PC-9 (cell line): ENCODE measurements at regions of chr2 and their contacts with region 1.

Region 1: GRCh38 chr2:12317814-12318426 is 398.8 kb upstream of the TRIB2 start:
- DNase-seq: peak; percentile 12 to 86
- H3K4me3 ChIP-seq: no peak overlapping the region; the same call in 1 of the 2 replicates
- H3K27ac ChIP-seq: peak overlapping the region; percentile 92
- H3K4me1 ChIP-seq: peaks cover 44% of the 10 kb centered on the region
- H3K27me3 ChIP-seq: no peaks in the 10 kb centered on the region
- CTCF ChIP-seq: no peak

Region 2: GRCh38 chr2:11697103-11697871 is 620.6 kb before region 1 on chr2:
- CTCF ChIA-PET with region 1: no interaction called
- POLR2A ChIA-PET with region 1: no interaction called
- intact Hi-C with region 1: loop called (anchors 5 kb)
- DNase-seq: peak; percentile 93 to 99
- H3K4me3 ChIP-seq: peak overlapping the region; percentile 24; the same call in 1 of the 2 replicates
- H3K27ac ChIP-seq: peak overlapping the region; percentile 83
- H3K4me1 ChIP-seq: peaks cover 79% of the 10 kb centered on the region
- H3K27me3 ChIP-seq: no peaks in the 10 kb centered on the region
- CTCF ChIP-seq: no peak

Region 3: DNA sequence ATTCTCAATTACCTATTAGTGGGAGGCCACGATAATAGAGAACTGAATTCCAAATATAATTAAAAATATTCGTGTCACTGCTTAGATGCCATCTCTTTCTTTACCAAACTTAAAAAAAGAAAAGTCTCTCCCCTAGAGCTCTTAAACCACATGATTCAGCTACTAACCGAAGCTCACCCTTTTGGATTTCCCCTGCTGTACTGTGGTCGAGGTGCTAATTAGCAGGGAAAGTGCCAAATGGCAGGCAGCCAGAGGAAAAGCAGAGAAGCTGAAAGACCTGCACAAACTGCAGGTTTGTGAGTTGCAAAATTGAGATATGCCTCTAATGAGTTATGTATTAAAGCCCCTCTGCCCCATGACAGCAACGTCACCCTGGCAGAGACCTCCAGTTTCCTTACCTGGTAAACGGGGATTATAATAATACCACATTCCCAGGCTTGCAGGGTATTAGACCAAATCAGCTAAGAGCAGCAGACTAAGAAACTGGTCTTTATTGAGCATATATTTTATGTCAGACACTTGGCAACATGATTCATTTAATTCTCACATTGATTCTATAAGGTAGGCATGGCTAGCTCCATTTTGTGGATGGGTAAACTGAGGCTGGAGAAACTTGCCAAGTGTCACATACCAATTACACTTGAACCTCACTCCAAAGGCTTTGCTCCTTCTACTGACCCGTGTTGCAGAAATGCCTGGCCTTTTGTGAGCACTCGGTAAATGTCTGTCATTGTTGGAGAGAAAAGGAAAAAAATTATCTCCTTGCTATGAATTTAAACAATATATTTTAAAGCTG is 311.8 kb before region 1 on chr2:
- CTCF ChIA-PET with region 1: no interaction called
- POLR2A ChIA-PET with region 1: no interaction called
- intact Hi-C with region 1: loop called (anchors 1 kb)
- DNase-seq: peak; percentile 55 to 60
- H3K4me3 ChIP-seq: no peak overlapping the region
- H3K27ac ChIP-seq: no peak overlapping the region
- H3K4me1 ChIP-seq: peaks cover 40% of the 10 kb centered on the region
- H3K27me3 ChIP-seq: no peaks in the 10 kb centered on the region
- CTCF ChIP-seq: no peak

Region 4: GRCh38 chr2:12456293-12457151 is 138.6 kb after region 1 on chr2:
- CTCF ChIA-PET with region 1: no interaction called
- POLR2A ChIA-PET with region 1: no interaction called
- intact Hi-C with region 1: loop called (anchors 5 kb)
- DNase-seq: peak; percentile 81 to 100
- H3K4me3 ChIP-seq: peak overlapping the region; percentile 47; the same call in 1 of the 2 replicates
- H3K27ac ChIP-seq: peak overlapping the region; percentile 88
- H3K4me1 ChIP-seq: peaks cover 38% of the 10 kb centered on the region
- H3K27me3 ChIP-seq: no peaks in the 10 kb centered on the region
- CTCF ChIP-seq: no peak

Region 5: DNA sequence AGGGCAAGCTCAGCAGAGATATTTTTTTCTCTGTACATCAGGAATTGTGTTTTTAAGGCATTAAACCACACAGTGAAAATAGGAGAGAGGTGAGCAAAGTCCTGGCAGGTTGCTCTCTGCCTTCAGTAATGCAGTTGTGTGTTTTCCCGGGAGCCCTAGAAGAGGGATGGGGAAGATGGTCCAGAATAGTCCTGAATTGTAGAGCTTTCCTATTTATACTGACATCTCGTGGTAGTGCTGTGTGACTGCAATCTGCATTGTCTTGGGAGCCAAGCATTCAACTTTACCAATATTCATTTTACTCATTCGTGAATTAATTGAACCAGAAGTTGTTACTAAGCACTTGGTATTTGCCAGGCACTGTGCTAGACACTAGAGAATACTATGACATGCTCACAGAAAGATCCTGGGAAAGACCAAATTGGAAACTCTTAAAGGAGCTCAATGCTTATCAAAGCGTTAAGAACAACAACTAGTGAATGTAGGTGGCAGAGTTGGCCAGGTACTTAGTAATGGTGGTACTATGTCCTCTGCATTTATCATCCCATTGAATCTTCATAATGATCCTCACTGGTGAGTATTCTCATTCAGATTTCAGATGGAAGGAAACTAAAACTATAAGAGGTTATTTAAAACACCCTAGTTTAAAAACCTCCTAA is 613.4 kb after region 1 on chr2:
- CTCF ChIA-PET with region 1: no interaction called
- POLR2A ChIA-PET with region 1: no interaction called
- intact Hi-C with region 1: loop called (anchors 2 kb)
- DNase-seq: peak in 1 of 2 experiments; percentile 53
- H3K4me3 ChIP-seq: no peak overlapping the region
- H3K27ac ChIP-seq: peak overlapping the region; percentile 85
- H3K4me1 ChIP-seq: peaks cover 35% of the 10 kb centered on the region
- H3K27me3 ChIP-seq: no peaks in the 10 kb centered on the region
- CTCF ChIP-seq: peak; percentile 80